GM10248 (cell line): ENCODE measurements at regions of chr15 and their contacts with region 1.

Region 1: DNA sequence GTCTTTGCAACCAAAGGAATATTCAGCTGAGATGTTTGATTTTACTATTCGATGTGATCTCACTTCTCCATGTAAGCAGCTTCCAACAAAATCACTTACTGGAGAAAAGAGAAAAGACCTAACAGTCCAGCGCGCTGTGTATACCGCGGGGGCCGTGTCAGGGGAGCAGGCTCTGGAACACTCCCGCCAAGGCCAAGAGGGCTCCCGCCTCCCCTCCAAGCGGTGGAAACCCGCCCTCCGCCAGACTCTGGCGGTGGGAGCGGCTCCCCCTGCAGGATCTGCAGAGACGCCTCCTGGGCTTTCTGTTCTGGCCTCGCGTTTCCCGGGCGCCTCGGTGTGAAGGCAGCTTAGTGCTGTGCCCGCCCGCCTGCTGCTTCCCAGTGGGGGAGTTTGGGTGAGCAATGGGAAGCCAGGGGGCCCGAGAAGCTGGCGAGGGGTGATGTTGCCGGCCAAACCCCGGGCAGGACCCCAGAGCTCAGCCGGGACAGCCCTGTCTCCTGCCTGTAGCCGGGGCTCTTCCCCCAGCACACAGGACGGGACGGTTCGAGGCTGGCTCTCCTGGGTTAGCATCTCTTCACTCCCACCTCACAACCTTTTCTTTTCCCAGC is 36.3 kb downstream of the CHST14 start:
- DNase-seq: peak; percentile 81
- CTCF ChIP-seq: peak; percentile 72

Region 2: GRCh38 chr15:40456299-40456712 is 50.8 kb before region 1 on chr15:
- CTCF ChIA-PET with region 1: interaction called, 10 read pairs
- POLR2A ChIA-PET with region 1: no interaction called
- DNase-seq: no peak
- CTCF ChIP-seq: no peak

Region 3: DNA sequence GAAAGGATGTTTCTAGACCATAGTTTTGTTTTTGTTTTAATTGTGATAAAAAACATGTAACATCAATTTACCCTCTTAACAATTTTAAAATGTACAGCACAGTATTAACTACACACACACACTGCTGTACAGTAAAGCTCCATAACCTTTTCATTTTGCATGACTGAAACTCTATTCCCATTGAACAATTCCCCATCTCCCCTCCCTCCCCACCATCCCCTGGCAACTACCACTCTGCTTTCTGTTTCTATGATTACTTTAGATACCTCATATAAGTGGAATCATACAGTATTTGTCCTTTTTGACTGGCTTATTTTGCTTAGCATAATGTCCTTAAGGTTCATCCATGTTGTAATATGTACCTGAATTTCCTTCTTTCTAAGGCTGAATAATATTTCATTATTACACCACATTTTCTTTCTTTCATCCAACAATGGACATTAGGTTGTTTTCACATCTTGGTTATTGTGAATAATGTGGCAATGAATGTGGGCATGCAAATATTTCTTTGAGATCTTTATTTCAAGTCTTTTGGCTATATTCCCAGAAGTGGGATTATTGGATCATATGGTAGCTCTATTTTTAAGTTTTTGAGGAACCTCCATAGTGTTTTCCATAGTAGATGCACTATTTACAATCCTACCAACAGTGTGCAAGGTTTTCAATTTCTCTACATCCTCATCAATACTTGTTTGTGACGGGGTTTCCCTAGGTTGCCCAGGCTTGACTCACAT is 25.6 kb before region 1 on chr15:
- CTCF ChIA-PET with region 1: interaction called, 10 read pairs
- POLR2A ChIA-PET with region 1: no interaction called
- DNase-seq: no peak
- CTCF ChIP-seq: no peak

Region 4: DNA sequence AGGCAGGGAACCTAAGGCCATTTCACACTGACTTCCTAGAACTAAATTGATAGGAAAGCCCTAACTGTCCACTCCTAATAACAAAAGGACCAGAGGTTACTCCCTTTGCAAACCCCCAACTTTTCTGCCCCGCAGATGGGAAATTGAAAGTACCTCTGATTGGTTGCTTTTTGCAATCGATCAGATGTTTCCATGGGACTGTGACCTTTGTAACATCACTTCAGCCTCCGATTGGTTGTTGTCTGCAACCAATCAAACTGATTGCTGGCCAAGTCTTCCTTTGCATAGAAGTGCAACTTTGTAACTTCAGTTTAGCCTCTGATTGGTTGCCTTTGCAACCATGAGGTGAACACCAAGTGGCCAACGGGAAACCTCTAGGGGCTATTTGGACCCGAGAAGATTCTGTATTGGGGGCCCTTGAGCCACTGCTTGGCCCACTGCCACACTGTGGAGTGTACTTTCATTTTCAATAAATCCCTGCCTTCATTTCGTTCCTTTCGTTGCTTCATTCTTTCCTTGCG is 75.7 kb after region 1 on chr15:
- CTCF ChIA-PET with region 1: no interaction called
- POLR2A ChIA-PET with region 1: no interaction called
- DNase-seq: peak; percentile 35
- CTCF ChIP-seq: no peak